ENCODE measurements at regions of chr6 and their contacts with region 1.

Region 1: DNA sequence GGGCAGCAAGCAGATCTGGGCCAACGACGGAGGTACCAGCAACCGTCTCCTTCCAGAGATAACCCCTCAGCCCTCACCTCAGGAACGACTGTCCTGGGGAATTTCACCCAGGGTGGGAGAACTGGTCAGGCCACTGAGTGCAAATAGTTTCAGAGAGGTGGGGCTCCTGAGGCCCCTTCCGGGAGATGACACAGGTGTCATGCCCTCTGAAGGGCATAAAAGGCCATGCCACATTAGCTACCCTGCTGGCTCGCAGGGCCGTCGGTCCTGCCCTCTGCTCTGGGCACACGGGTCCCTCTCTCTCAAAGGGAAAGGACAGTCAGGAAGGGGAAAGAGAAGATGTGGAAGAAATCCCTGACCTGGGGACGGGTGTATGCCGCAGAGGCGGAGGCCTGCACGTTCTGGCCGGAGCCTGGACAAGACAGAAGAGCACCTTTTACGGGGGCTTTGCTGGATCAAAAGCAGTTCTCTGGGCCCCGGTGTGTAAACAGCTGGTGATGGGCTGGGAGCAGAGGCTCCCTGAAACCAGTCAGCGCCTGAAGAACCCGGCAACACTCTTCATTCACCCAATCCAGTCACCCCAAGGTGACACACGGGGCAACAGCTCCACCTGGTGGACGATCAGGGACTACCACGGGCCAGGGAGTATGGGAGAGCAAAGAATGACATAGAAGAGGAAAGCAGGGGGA is 6.4 kb upstream of the TAF8 start:
- DNase-seq: peak; percentile 90 to 91
- ATAC-seq: peak; percentile 68 to 86 (median 76)
- H3K4me3 ChIP-seq: peak overlapping the region in 6 of 10 donors; percentile 5 to 28 (median 16)
- H3K27ac ChIP-seq: peak overlapping the region in 9 of 10 donors; percentile 10 to 98 (median 92)
- H3K4me1 ChIP-seq: peaks cover 31 to 95% (median 83%) of the 10 kb centered on the region in 9 donors
- H3K27me3 ChIP-seq: no peaks in the 10 kb centered on the region
- CTCF ChIP-seq: peak; percentile 92 to 97 (median 96)

Region 2: GRCh38 chr6:41756354-41756753 is 287.6 kb before region 1 on chr6:
- intact Hi-C with region 1: no loop called
- DNase-seq: no peak
- ATAC-seq: no peak
- H3K4me3 ChIP-seq: no peak overlapping the region
- H3K27ac ChIP-seq: no peak overlapping the region
- H3K4me1 ChIP-seq: no peaks in the 10 kb centered on the region
- H3K27me3 ChIP-seq: no peaks in the 10 kb centered on the region
- CTCF ChIP-seq: no peak

Region 3: DNA sequence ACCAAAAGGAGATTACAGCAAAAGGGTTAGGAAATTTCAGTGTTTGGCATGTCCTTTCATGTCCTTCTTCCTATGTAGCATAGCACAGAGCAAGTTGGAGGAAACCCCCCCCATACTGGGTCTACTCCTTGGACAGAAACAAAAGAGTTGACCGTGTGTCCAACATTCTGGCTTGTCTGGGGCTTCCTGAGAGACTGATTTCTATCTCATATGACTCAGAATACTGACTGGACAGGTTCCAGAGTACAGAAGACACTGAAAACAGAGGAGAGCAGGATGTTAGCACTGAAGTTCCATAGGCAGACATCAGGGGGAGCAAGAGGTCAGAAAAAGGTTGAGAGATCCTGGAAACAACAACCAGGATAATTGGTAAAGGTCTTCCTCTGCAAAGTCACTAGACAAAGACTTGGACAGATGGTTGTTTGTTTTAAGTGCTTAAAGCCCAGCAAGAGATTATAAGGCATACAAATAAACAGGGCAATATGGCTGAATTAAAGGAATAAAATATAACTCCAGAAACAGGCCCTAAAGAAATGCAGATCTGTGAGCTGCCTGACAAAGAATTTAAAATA is 197.2 kb before region 1 on chr6:
- intact Hi-C with region 1: loop called (anchors 1 to 5 kb)
- DNase-seq: peak in 1 of 2 donors; percentile 83
- ATAC-seq: peak; percentile 94 to 98 (median 96)
- H3K4me3 ChIP-seq: no peak overlapping the region
- H3K27ac ChIP-seq: peak overlapping the region in 7 of 10 donors; percentile 29 to 79 (median 57)
- H3K4me1 ChIP-seq: peaks cover 0 to 16% (median 13%) of the 10 kb centered on the region in 9 donors
- H3K27me3 ChIP-seq: no peaks in the 10 kb centered on the region
- CTCF ChIP-seq: peak; percentile 55 to 89 (median 80)

Region 4: GRCh38 chr6:41901882-41902519 is 141.9 kb before region 1 on chr6:
- intact Hi-C with region 1: loop called in 1 of 10 experiments (anchors 5 kb)
- DNase-seq: peak in 1 of 2 donors; percentile 10
- ATAC-seq: no peak
- H3K4me3 ChIP-seq: no peak overlapping the region
- H3K27ac ChIP-seq: no peak overlapping the region
- H3K4me1 ChIP-seq: peaks cover 0 to 19% (median 4%) of the 10 kb centered on the region in 9 donors
- H3K27me3 ChIP-seq: no peaks in the 10 kb centered on the region
- CTCF ChIP-seq: peak in 5 of 9 donors; percentile 13 to 39 (median 23)

Region 5: DNA sequence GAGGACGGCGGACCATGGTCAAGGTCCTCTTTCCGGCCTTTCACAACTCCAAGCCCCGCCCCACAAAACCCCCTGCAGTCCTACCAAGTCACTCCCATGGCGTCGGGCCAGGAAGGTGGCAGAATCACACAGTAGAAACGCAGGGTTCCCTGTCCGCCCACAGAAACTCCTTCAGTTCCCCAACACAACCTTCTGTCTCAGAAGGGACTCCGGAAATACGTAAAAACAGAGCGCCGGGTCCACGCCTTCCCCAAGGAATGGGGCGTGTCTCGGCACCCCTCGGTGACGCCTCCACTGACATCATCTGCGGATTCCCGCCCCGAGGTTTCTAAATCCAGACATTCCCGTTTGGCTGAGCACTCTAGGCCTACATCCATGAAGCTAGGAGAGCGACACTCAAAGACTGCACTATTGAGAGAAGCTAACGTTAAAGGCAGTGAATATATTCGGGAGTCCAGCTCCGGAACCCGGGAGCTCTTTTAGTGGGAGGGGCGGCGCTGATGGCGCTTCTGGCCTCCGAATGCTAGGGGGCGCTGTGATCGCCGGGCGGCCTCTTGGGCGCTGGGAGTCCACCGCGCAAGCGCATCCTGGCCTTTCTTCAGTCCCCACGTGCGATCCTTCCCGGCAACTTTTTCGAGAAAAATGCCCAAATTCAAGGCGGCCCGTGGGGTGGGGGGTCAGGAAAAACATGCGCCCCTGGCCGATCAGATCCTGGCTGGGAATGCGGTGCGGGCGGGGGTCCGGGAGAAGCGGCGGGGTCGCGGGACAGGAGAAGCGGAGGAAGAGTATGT is 122.8 kb before region 1 on chr6 and contains the starts of genes BYSL and MED20:
- intact Hi-C with region 1: loop called in 5 of 10 experiments (anchors 5 kb)
- DNase-seq: peak; percentile 93 to 96
- ATAC-seq: peak; percentile 98 to 99 (median 98)
- H3K4me3 ChIP-seq: peak within 1 kb of the TSS; percentile 57 to 91 (median 76)
- H3K27ac ChIP-seq: peak within 1 kb of the TSS; percentile 92 to 99 (median 98)
- H3K4me1 ChIP-seq: peaks cover 0 to 50% (median 33%) of the 10 kb centered on the region in 9 donors
- H3K27me3 ChIP-seq: no peaks in the 10 kb centered on the region
- CTCF ChIP-seq: peak; percentile 97 to 100 (median 99)
- total RNA-seq, gene BYSL: 7.5 to 14.6 (median 9.9) TPM
- total RNA-seq, gene MED20: 12.6 to 21.5 (median 17.3) TPM

Region 6: DNA sequence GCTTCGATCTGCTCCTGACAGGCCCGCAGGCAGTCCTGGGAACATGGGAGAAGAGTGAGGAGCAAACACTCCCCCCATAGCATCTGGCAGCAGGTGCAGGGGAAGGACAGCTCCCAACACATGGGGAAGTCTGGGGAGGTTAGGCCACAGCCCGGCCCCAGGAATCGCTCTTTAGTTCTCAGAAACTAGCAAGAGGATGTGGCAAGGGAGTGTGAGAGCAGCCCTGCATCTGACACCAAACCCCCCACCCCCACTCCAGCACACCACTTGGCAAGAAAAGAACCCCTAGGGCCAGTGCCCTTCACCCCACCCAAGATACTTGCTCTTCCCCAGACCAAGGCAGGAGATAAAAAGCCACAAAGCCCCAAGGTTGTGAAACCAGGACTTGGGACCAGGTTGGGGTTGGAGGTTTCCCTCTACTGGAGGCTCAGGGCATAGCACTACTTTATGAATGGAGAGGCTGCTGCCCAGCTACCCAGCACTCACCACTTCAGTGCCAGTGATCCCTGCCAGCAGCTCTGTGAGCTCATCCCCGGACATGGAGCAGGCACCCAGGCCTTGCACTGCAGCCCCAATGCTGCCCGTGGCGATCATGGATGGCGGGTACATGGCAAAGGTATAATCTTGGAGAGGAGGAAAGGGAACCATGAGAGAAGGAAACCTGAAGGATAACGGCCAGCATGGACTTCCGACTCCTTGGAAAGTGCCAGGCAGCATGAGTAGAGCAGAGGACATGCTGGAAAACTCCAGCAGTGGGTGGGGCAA is 107.7 kb before region 1 on chr6:
- intact Hi-C with region 1: loop called (anchors 2 to 5 kb)
- DNase-seq: peak; percentile 56 to 81
- ATAC-seq: peak; percentile 46 to 79 (median 70)
- H3K4me3 ChIP-seq: peak overlapping the region in 1 of 10 donors; percentile 11
- H3K27ac ChIP-seq: peak overlapping the region in 8 of 10 donors; percentile 11 to 94 (median 88)
- H3K4me1 ChIP-seq: peaks cover 26 to 64% (median 49%) of the 10 kb centered on the region in 9 donors
- H3K27me3 ChIP-seq: no peaks in the 10 kb centered on the region
- CTCF ChIP-seq: peak; percentile 67 to 85 (median 81)

Region 7: DNA sequence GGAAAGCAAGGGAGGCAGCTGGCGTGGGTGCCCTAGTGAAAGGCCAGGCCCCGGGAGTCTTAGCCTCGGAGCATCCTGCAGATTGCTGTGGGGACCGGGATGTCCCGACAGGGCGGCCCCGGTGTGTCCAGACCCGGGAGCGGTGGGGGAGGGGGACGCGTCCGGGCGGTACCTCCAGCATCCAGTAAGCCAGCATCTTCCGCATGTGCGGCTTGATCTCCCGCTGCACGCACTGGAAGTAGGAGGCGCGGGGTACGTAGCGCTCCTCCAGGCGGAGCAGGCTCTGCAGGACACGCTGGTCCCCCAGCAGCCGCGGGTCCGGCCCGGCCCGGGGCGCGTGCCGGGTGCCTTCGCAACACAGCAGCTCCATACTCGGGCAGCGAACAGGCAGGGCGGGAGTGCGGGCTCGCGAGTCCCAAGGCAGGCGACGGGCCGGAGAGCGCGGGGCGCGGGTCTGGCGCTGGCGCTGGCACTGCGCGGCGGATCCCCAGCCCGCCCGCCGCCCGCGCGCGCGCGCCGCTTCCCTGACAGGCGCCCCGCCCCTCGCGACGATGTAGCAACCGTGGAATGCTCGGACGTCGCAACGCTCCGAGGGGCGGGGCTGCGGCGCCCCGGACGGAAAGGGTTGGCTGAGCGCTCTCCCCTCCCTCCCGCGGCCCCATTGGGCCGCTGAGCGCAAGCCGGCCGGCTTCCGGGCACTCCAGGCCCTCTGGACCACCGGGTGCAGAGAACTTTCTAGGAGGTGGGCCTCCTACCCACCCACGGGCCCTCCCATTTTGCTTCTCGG is 102.5 kb before region 1 on chr6 and contains the start of gene CCND3:
- intact Hi-C with region 1: loop called (anchors 2 to 5 kb)
- DNase-seq: peak; percentile 93 to 95
- ATAC-seq: peak; percentile 91 to 95 (median 93)
- H3K4me3 ChIP-seq: peak within 1 kb of the TSS; percentile 57 to 99 (median 92)
- H3K27ac ChIP-seq: peak within 1 kb of the TSS; percentile 38 to 94 (median 88)
- H3K4me1 ChIP-seq: peaks cover 26 to 60% (median 49%) of the 10 kb centered on the region in 9 donors
- H3K27me3 ChIP-seq: no peaks in the 10 kb centered on the region
- CTCF ChIP-seq: peak in 2 of 9 donors; percentile 7 to 9
- total RNA-seq, gene CCND3: 29.6 to 51.8 (median 37.5) TPM

Measured in heart right ventricle (tissue), 16 donors.